CD4-positive, alpha-beta T cell (primary cell): ENCODE measurements at regions of chr7 and their contacts with region 1.

Region 1: GRCh38 chr7:23546897-23547572 is 15.3 kb upstream of the TRA2A start:
- DNase-seq: peak; percentile 56 to 92 (median 69)
- ATAC-seq: peak; percentile 95
- H3K4me3 ChIP-seq: no peak overlapping the region
- H3K4me3 Mint-ChIP-seq: no peak overlapping the region
- H3K27ac ChIP-seq: no peak overlapping the region
- H3K27ac Mint-ChIP-seq: no peak overlapping the region
- H3K4me1 ChIP-seq: peaks cover 6% of the 10 kb centered on the region
- H3K4me1 Mint-ChIP-seq: peaks cover 13% of the 10 kb centered on the region
- H3K27me3 ChIP-seq: no peaks in the 10 kb centered on the region
- H3K27me3 Mint-ChIP-seq: no peaks in the 10 kb centered on the region
- CTCF ChIP-seq: peak; percentile 92

Region 2: GRCh38 chr7:23273141-23273599 is 273.9 kb before region 1 on chr7:
- CTCF ChIA-PET with region 1: interaction called, 5 read pairs
- POLR2A ChIA-PET with region 1: no interaction called
- intact Hi-C with region 1: loop called (anchors 1 to 5 kb)
- DNase-seq: peak; percentile 79 to 96 (median 87)
- ATAC-seq: peak; percentile 97
- H3K4me3 ChIP-seq: peak overlapping the region; percentile 15
- H3K4me3 Mint-ChIP-seq: peak overlapping the region; percentile 26
- H3K27ac ChIP-seq: no peak overlapping the region
- H3K27ac Mint-ChIP-seq: no peak overlapping the region
- H3K4me1 ChIP-seq: peaks cover 8% of the 10 kb centered on the region
- H3K4me1 Mint-ChIP-seq: peaks cover 9% of the 10 kb centered on the region
- H3K27me3 ChIP-seq: no peaks in the 10 kb centered on the region
- H3K27me3 Mint-ChIP-seq: peaks cover 4% of the 10 kb centered on the region
- CTCF ChIP-seq: peak; percentile 90

Region 3: GRCh38 chr7:23426876-23427275 is 120.2 kb before region 1 on chr7:
- CTCF ChIA-PET with region 1: no interaction called
- POLR2A ChIA-PET with region 1: no interaction called
- intact Hi-C with region 1: loop called in 1 of 2 experiments (anchors 5 kb)
- DNase-seq: no peak
- ATAC-seq: no peak
- H3K4me3 ChIP-seq: no peak overlapping the region
- H3K4me3 Mint-ChIP-seq: no peak overlapping the region
- H3K27ac ChIP-seq: no peak overlapping the region
- H3K27ac Mint-ChIP-seq: no peak overlapping the region
- H3K4me1 ChIP-seq: no peaks in the 10 kb centered on the region
- H3K4me1 Mint-ChIP-seq: no peaks in the 10 kb centered on the region
- H3K27me3 ChIP-seq: peaks cover 2 to 15% of the 10 kb centered on the region in 2 experiments
- H3K27me3 Mint-ChIP-seq: peaks cover 29% of the 10 kb centered on the region
- CTCF ChIP-seq: no peak

Region 4: DNA sequence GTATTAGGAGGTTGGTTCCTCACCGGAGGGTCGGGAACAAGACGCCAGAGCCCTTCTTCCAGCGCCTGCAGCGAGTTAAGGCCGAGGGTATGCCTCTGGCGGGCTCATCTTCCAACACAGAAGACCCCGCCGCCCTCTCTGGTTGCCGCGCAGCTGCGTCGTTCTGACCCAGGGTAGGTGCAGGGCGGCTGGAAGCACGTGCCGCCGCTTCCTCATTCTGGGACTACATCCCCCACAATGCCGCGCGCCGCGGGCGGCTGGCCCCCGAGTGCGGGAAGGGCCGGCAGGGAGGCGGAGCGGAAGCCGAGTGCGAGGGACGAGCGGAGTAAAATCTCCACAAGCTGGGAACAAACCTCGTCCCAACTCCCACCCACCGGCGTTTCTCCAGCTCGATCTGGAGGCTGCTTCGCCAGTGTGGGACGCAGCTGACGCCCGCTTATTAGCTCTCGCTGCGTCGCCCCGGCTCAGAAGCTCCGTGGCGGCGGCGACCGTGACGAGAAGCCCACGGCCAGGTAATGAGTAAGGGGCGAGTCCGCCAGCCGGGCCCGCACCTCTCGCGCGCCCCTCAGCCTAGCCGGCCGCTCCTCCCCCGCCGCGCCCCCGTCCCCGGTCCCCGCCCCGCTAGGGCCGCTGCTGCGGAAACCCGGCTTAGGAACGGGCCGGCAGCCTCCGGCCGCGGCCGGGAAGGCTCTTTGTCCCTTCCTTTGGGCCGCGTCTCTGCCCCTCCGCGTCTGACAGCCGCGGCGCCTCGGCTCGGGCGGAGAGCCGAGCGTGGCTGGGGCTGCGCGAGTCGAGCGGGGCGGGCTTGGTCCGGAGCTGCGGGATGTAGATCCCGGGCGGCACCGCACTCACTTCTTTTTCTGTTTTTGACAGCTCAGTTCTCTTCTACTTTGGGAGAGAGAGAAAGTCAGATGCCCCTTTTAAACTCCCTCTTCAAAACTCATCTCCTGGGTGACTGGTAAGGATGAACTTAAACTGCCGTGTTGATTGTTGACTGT is 50.4 kb after region 1 on chr7 and contains the start of gene CCDC126:
- CTCF ChIA-PET with region 1: interaction called, 15 read pairs
- POLR2A ChIA-PET with region 1: interaction called, 7 read pairs
- intact Hi-C with region 1: loop called in 1 of 2 experiments (anchors 2 kb)
- DNase-seq: peak; percentile 57 to 89 (median 76)
- ATAC-seq: peak; percentile 90
- H3K4me3 ChIP-seq: peak within 1 kb of the TSS; percentile 86
- H3K4me3 Mint-ChIP-seq: peak within 1 kb of the TSS; percentile 95
- H3K27ac ChIP-seq: peak within 1 kb of the TSS in 1 of 2 donors; percentile 75
- H3K27ac Mint-ChIP-seq: peak within 1 kb of the TSS; percentile 80
- H3K4me1 ChIP-seq: peaks cover 17% of the 10 kb centered on the region
- H3K4me1 Mint-ChIP-seq: peaks cover 32% of the 10 kb centered on the region
- H3K27me3 ChIP-seq: no peaks in the 10 kb centered on the region
- H3K27me3 Mint-ChIP-seq: no peaks in the 10 kb centered on the region
- CTCF ChIP-seq: no peak
- total RNA-seq, gene CCDC126: 8.3 to 10.3 TPM

Region 5: DNA sequence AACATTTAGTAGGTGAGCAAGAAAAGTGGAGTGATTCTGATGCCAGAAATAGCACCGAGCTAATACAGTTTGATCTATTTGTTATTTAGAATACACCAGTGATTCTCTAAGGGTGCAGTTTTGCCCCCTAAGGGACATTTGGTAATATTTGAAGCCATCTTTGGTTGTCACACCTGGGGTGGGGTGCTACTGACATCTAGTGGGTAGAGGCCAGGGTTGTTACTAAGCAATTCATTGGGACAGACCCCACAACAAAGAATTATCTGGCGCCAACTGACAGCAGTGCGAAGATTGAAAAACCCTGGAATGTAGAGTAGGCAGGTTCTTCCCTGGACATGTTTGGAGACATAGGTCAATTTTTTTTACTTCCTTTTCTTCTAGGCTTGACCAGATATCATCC is 1040.8 kb after region 1 on chr7:
- CTCF ChIA-PET with region 1: no interaction called
- POLR2A ChIA-PET with region 1: no interaction called
- intact Hi-C with region 1: loop called in 1 of 2 experiments (anchors 10 kb)
- DNase-seq: peak; percentile 27 to 78 (median 50)
- ATAC-seq: peak; percentile 84
- H3K4me3 ChIP-seq: no peak overlapping the region
- H3K4me3 Mint-ChIP-seq: no peak overlapping the region
- H3K27ac ChIP-seq: no peak overlapping the region
- H3K27ac Mint-ChIP-seq: no peak overlapping the region
- H3K4me1 ChIP-seq: no peaks in the 10 kb centered on the region
- H3K4me1 Mint-ChIP-seq: peaks cover 15% of the 10 kb centered on the region
- H3K27me3 ChIP-seq: no peaks in the 10 kb centered on the region
- H3K27me3 Mint-ChIP-seq: no peaks in the 10 kb centered on the region
- CTCF ChIP-seq: peak; percentile 78

Region 6: DNA sequence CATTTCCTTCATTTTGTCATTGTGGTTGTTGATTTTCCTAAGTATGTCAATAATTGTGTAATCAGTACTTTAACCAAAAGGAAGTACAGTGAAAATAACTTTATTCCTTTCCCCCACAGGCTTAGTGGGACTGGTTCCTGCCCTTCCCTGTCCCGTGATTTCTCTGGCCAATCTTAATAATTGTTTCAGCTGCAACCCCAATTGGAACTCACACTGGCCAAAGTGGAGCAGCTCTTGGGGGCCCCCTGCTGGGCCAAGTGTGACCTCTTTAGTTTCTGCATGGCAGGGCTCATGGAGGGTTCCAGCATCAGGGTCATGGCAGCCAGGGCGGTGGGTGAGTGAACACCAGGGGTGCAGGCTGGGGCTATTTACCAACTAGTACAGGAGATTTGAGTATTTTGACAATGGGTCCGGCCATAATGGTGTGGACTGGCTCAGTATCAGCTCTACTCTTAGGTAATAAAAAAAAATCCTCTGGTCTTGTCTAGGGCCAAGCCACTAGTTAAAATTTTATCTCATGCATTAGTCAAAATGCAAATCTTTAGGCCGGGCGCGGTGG is 1546.3 kb after region 1 on chr7:
- CTCF ChIA-PET with region 1: no interaction called
- POLR2A ChIA-PET with region 1: no interaction called
- intact Hi-C with region 1: loop called in 1 of 2 experiments (anchors 10 kb)
- DNase-seq: peak; percentile 59 to 82 (median 70)
- ATAC-seq: peak; percentile 80
- H3K4me3 ChIP-seq: no peak overlapping the region
- H3K4me3 Mint-ChIP-seq: no peak overlapping the region
- H3K27ac ChIP-seq: no peak overlapping the region
- H3K27ac Mint-ChIP-seq: no peak overlapping the region
- H3K4me1 ChIP-seq: peaks cover 9% of the 10 kb centered on the region
- H3K4me1 Mint-ChIP-seq: peaks cover 12% of the 10 kb centered on the region
- H3K27me3 ChIP-seq: no peaks in the 10 kb centered on the region
- H3K27me3 Mint-ChIP-seq: peaks cover 4% of the 10 kb centered on the region
- CTCF ChIP-seq: peak; percentile 93